ENCODE measurements at regions of chr16 and their contacts with region 1.

Region 1: GRCh38 chr16:53054670-53055485 is at the start of gene CHD9:
- DNase-seq: peak; percentile 94
- H3K4me3 ChIP-seq: peak within 1 kb of the TSS; percentile 62
- H3K27ac ChIP-seq: peak within 1 kb of the TSS; percentile 79
- H3K4me1 ChIP-seq: peaks cover 28% of the 10 kb centered on the region
- H3K27me3 ChIP-seq: no peaks in the 10 kb centered on the region
- CTCF ChIP-seq: peak; percentile 99
- total RNA-seq, gene CHD9: 64.1 and 76.8 TPM in 2 replicates

Region 2: DNA sequence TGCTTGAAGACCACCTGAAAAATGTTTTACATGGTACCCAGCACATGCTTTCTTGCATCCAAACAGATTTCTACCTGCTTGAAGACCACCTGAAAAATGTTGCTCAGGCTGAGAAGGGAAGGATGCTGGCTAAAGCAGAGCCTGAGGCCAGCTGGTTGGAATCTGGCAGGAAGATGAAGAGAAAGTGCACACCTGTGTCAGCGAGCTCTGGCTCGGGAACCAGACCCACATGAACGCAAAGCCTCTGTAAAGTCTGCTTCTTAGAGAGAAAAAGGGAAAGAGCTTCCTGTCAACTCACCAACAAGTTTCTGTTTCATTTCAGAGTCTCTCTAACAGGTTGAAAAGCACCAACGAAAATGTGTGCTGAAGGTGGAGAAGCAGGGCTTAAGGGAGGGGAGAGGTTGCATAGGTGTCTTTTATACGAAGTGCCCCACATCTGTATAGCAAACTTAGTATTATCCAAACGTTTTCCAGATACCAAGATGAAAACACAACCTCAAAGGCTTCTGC is 733.9 kb before region 1 on chr16:
- CTCF ChIA-PET with region 1: no interaction called
- POLR2A ChIA-PET with region 1: no interaction called
- intact Hi-C with region 1: no loop called
- DNase-seq: no peak
- H3K4me3 ChIP-seq: no peak overlapping the region
- H3K27ac ChIP-seq: no peak overlapping the region
- H3K4me1 ChIP-seq: no peaks in the 10 kb centered on the region
- H3K27me3 ChIP-seq: no peaks in the 10 kb centered on the region
- CTCF ChIP-seq: no peak

Region 3: DNA sequence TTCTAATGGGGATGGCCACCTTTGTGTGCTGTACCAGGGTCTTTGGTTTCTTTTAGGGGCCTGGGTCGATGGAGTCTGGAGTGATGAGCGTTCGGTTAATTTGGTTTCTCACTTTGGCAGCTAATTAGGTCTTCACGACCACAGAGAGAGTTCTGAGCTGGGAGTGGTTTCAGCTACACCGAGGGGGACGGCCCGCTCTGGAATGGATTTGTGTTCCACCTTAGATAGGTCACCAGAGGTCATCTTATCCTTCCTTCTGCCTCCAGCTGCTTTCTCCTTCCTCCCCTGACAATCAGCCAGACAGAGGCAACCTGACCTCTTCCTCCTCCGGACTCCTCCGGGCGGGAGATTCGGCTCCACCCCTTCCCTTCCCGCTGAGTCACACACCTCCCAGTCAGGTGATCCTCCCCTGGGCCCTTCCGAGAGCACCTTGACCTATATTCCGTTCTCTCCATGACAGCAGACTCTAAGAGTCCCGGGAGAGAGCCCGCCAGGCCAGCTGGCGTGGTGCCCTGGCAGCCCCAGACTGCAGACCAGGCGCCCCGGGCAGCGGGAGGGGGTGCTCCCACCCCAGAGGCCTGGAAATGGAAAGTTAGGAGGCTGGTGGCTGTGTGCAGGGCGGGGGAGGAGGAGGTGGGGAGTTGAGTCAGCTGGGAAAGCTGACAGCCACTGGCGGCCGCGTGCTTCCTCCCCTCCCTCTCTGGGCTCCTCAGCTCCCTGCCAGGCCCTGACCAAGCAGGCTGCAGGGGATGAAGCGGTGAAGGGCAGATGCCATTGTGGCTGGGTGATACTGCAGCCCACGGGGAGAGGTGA is 44.6 kb after region 1 on chr16:
- CTCF ChIA-PET with region 1: interaction called, 5 read pairs
- POLR2A ChIA-PET with region 1: interaction called, 5 read pairs
- intact Hi-C with region 1: loop called (anchors 1 kb)
- DNase-seq: peak; percentile 87
- H3K4me3 ChIP-seq: peak overlapping the region; percentile 49
- H3K27ac ChIP-seq: peak overlapping the region; percentile 92
- H3K4me1 ChIP-seq: peaks cover 54% of the 10 kb centered on the region
- H3K27me3 ChIP-seq: no peaks in the 10 kb centered on the region
- CTCF ChIP-seq: no peak

Region 4: DNA sequence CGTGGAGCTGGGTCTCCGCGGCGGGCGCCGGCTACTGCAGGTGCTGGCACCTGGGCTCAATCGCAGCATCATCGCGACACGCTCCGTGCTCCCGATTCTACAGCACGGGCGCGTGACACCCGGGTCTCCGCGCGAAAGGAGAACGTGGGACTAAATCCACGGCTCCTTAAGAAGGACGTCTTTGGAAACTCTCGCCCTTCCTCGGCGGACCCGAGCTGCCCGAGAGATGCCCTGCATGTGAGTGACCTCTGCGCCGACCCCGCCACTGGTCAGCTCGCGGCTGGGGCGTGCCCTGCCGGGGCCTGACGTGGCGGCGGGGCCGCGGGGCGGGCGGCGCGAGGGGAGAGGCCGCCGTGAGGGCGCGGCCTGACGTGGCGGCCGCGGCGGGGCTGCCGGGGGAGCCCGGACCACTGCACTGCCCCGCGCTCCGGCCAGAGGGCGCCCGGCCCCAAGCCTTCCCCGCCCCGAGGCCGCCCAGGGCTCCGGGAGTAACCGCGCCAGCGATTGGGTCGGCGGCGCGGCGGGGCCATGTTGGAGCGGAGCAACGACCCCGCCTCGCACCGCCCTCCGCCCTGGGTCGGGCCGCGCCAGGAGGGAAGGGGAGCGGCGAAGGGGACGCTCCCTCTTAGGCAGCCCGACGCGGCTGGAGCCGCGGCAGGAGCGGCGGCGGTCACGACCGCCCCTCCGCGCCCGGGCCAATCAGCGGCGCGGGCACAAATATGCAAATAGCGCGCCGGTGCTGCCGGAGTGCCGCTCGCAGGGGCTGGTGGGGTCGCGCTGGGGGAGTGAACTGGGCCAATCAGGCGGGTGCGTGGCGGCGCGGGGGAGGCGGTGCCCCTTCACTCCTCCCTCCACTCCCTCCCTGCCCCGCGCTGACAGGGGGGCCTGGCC is 75.5 kb after region 1 on chr16:
- CTCF ChIA-PET with region 1: no interaction called
- POLR2A ChIA-PET with region 1: no interaction called
- intact Hi-C with region 1: loop called (anchors 2 kb)
- DNase-seq: peak; percentile 98
- H3K4me3 ChIP-seq: peak overlapping the region; percentile 83
- H3K27ac ChIP-seq: peak overlapping the region; percentile 79
- H3K4me1 ChIP-seq: peaks cover 38% of the 10 kb centered on the region
- H3K27me3 ChIP-seq: no peaks in the 10 kb centered on the region
- CTCF ChIP-seq: peak; percentile 25; the same call in 1 of the 2 replicates

Region 5: GRCh38 chr16:53159781-53160436 is 105.0 kb after region 1 on chr16:
- CTCF ChIA-PET with region 1: interaction called, 4 read pairs
- POLR2A ChIA-PET with region 1: no interaction called
- intact Hi-C with region 1: loop called (anchors 1 kb)
- DNase-seq: peak; percentile 80
- H3K4me3 ChIP-seq: no peak overlapping the region
- H3K27ac ChIP-seq: no peak overlapping the region
- H3K4me1 ChIP-seq: no peaks in the 10 kb centered on the region
- H3K27me3 ChIP-seq: no peaks in the 10 kb centered on the region
- CTCF ChIP-seq: peak; percentile 78

Region 6: GRCh38 chr16:53207810-53208752 is 153.2 kb after region 1 on chr16:
- CTCF ChIA-PET with region 1: interaction called, 15 read pairs
- POLR2A ChIA-PET with region 1: no interaction called
- intact Hi-C with region 1: loop called (anchors 1 kb)
- DNase-seq: peak; percentile 94
- H3K4me3 ChIP-seq: peak overlapping the region; percentile 56
- H3K27ac ChIP-seq: peak overlapping the region; percentile 88
- H3K4me1 ChIP-seq: peaks cover 27% of the 10 kb centered on the region
- H3K27me3 ChIP-seq: no peaks in the 10 kb centered on the region
- CTCF ChIP-seq: peak; percentile 75

Region 7: DNA sequence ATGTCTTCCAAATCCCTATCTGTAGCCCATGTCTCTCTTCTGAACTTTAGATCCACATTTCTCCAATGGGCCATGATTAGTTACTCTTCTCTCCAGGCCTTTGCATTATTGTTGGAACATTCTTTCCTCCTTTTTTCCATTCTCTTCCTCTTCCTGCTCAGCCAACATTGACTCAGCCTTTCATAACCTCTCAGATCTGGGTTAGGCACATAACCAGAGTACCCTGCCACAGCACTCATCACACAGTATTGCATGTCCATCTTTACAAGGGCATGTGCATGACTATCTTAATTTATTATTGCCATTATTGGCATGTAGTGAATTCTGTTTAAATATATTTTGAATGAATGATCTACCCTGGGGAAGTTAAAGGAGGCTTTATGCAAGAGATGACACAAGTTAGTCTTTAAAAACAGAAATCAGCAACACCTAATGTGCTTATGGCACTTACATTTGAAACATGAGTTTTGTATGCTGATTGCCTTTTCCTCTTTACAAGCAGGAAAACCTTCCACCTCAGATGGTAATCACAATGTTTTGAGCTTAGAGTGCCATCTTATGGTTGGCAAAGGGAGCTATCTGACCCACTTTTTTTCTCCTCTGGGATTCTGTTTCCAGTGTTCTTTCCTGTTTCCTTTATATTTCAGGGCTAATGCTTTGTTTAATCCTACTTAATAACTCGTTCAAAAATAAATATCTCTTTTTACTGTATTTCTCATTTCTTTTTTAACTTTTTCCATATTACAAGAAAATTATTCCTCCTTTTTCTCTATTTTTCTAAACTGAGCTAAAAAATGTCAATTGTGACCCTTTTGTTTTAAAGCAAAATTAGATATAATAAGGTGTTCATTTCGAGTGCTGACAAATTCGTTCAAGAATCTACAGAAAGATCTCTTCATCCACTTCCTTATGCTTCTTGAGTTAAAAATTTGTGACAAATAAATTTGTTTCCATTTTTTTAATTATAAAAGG is 228.4 kb after region 1 on chr16:
- CTCF ChIA-PET with region 1: interaction called, 6 read pairs
- POLR2A ChIA-PET with region 1: no interaction called
- intact Hi-C with region 1: loop called (anchors 5 kb)
- DNase-seq: peak; percentile 79
- H3K4me3 ChIP-seq: no peak overlapping the region
- H3K27ac ChIP-seq: no peak overlapping the region
- H3K4me1 ChIP-seq: no peaks in the 10 kb centered on the region
- H3K27me3 ChIP-seq: no peaks in the 10 kb centered on the region
- CTCF ChIP-seq: peak; percentile 78

Region 8: DNA sequence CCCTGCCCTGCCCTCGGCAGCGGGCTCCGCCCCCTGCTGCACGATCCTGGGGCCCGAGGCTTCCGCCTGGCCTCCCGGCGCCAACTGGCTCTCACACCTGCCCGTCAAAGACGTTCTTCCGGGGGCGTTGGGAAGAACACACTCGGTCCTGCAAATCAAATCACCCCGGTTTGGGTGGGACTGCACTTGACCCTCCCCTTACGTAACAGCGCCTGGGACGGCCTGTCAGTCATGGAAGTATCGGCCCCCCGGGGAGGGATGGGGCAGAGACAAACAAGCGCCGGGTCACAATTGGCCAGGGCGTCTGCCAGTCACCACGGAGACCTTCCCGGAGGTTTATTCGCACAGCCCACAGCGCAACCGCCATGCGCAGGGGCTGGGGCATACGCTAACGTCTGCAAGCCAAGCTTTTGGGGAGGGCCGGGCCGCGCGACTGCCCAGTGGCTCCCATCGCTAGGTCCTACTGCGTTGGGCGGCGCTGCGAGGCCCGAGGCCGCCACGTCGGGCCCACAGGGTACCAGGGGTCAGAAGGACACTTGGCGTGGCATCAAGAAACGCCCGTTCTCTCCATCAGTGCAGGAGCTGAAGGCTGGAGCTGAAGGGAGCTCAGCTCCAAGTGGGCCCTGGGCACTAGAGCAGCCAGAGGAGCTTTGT is 448.5 kb after region 1 on chr16:
- CTCF ChIA-PET with region 1: no interaction called
- POLR2A ChIA-PET with region 1: no interaction called
- intact Hi-C with region 1: loop called (anchors 10 kb)
- DNase-seq: peak; percentile 100
- H3K4me3 ChIP-seq: peak overlapping the region; percentile 90
- H3K27ac ChIP-seq: peak overlapping the region; percentile 75
- H3K4me1 ChIP-seq: peaks cover 10% of the 10 kb centered on the region
- H3K27me3 ChIP-seq: no peaks in the 10 kb centered on the region
- CTCF ChIP-seq: no peak